PC-9 (cell line): ENCODE measurements at regions of chr1 and their contacts with region 1.

Region 1: DNA sequence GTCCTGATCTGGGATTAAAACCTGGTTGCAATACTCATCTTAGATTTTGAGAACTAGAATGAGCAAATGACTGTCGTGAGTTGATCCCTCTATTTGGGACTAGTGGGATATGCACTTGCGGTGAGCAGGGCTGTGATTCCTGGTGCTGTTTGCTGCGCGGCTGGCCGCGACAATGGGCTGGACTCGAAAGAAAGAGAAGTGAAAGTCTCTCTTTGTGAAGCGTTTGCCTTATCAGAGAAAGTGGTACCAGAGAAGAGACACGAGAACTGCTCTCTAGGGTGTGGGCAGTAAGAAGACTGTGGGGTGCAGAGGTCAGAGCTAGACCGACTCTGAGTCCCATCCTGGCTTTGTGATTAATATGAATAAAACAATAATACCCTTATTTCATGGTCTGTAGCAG is 8.6 kb downstream of the ST6GALNAC3 start:
- DNase-seq: no peak
- H3K4me3 ChIP-seq: no peak overlapping the region
- H3K27ac ChIP-seq: no peak overlapping the region
- H3K4me1 ChIP-seq: no peaks in the 10 kb centered on the region
- H3K27me3 ChIP-seq: no peaks in the 10 kb centered on the region
- CTCF ChIP-seq: no peak

Region 2: DNA sequence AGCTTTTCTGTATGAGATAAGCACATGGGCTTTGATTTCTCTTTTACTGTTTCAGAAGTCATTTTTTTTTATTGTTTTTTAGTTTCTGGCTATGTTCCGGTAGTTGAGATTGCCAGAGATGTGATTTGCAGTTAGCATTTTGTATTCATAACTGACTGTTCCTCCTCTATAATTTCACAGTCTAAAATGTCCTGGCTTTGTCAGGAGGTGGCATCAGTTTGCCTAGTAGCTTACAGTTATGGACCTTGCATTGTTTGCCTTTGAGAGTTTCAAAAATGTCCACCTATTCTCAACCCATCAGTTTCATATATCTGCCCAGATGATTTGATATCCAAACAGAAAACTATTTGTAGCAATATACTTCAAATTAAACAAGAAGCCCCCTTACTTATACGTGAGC is 48.1 kb before region 1 on chr1:
- CTCF ChIA-PET with region 1: no interaction called
- POLR2A ChIA-PET with region 1: no interaction called
- intact Hi-C with region 1: no loop called
- DNase-seq: no peak
- H3K4me3 ChIP-seq: no peak overlapping the region
- H3K27ac ChIP-seq: no peak overlapping the region
- H3K4me1 ChIP-seq: no peaks in the 10 kb centered on the region
- H3K27me3 ChIP-seq: 0 out of 2 replicates have a peak, but pooled peaks cover 3% of the 10 kb centered on the region
- CTCF ChIP-seq: peak; percentile 46

Region 3: GRCh38 chr1:76857973-76858372 is 774.8 kb after region 1 on chr1:
- CTCF ChIA-PET with region 1: no interaction called
- POLR2A ChIA-PET with region 1: no interaction called
- intact Hi-C with region 1: loop called (anchors 5 kb)
- DNase-seq: no peak
- H3K4me3 ChIP-seq: no peak overlapping the region
- H3K27ac ChIP-seq: no peak overlapping the region
- H3K4me1 ChIP-seq: no peaks in the 10 kb centered on the region
- H3K27me3 ChIP-seq: peaks cover 6% of the 10 kb centered on the region
- CTCF ChIP-seq: no peak